ENCODE measurements at regions of chr14 and their contacts with region 1.

Region 1: DNA sequence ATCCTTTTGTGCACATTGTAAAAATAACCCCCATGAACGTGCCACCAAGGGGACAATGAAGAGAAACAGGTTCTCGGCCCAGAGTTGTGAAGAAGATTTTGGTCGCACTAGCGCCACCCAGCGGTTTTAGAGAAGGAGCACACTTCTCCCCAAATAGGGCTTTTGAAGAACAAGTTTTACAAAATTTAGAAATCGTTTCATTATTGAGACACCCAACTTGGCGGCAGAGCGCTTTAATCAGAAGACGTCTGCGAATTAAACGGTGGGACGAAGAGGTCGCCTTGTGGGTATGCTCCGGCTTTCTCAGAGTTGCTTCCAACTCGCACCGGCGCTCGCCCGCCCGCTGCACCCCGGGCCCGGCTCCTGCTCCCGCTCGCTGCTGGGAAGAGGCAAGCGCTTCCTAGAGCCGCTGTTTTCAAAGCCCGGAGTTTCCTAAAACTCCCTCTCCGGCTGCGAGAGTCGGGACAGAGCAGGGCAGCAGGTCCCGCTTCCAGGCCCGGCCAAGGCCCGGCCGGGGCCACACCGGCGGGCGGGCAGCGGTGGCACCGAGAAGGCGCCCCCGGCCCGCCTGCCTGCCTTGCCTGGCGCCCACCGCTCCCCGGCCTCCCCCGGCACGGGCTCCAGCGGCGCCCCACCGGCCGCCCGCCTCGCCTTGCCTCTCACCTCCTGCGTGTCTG is 673 bp downstream of the FOXA1 start:
- DNase-seq: peak; percentile 99
- ATAC-seq: peak; percentile 19
- H3K4me3 ChIP-seq: peak overlapping the region; percentile 87 to 96 (median 95)
- H3K27ac ChIP-seq: peak overlapping the region; percentile 96
- H3K4me1 ChIP-seq: peaks cover 43% of the 10 kb centered on the region
- H3K27me3 ChIP-seq: no peaks in the 10 kb centered on the region; a peak in 1 of 5 replicates
- CTCF ChIP-seq: peak; percentile 95
- EP300 ChIP-seq: peak in 1 of 2 experiments; percentile 23; a peak in 1 of 4 replicates
- POLR2A ChIP-seq: no peak
- RAD21 ChIP-seq: peak; percentile 88

Region 2: GRCh38 chr14:37253905-37254304 is 340.5 kb before region 1 on chr14:
- CTCF ChIA-PET with region 1: interaction called, 16 read pairs
- POLR2A ChIA-PET with region 1: interaction called, 19 read pairs
- in situ Hi-C with region 1: loop called (anchors 5 kb)
- intact Hi-C with region 1: loop called (anchors 1 kb)
- DNase-seq: no peak
- ATAC-seq: no peak
- H3K4me3 ChIP-seq: no peak overlapping the region
- H3K27ac ChIP-seq: no peak overlapping the region
- H3K4me1 ChIP-seq: peaks cover 29% of the 10 kb centered on the region
- H3K27me3 ChIP-seq: no peaks in the 10 kb centered on the region
- CTCF ChIP-seq: no peak
- EP300 ChIP-seq: no peak
- POLR2A ChIP-seq: no peak
- RAD21 ChIP-seq: no peak

Region 3: DNA sequence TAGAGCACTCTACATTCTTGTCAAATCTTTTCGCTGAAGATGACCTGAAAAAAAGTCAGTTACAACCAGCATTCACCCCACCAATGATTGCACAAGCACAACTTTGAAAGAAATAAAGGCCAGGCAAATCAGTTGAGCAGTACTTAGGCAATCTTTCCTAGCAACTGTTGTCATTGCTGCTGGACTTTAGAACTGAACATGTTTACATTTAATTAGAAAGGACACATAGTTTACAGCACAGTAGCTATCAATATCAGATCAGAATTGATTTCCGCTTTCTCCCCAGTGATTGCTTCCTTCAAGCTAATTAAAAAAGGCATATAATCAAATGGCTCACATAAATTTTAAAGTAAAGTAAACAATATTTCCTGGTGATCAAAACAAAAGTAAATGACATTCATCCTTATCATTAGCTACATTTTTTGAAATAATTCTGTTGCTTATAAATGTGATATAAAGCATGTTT is 127.7 kb before region 1 on chr14:
- CTCF ChIA-PET with region 1: no interaction called
- POLR2A ChIA-PET with region 1: interaction called, 34 read pairs
- in situ Hi-C with region 1: no loop called
- intact Hi-C with region 1: loop called (anchors 1 kb)
- DNase-seq: peak; percentile 100
- ATAC-seq: peak; percentile 97
- H3K4me3 ChIP-seq: peak overlapping the region in 1 of 3 experiments; percentile 12; a peak in 2 of 6 replicates
- H3K27ac ChIP-seq: peak overlapping the region; percentile 81
- H3K4me1 ChIP-seq: peaks cover 46% of the 10 kb centered on the region
- H3K27me3 ChIP-seq: no peaks in the 10 kb centered on the region
- CTCF ChIP-seq: no peak
- EP300 ChIP-seq: peak; percentile 100
- POLR2A ChIP-seq: no peak
- RAD21 ChIP-seq: peak; percentile 67

Region 4: DNA sequence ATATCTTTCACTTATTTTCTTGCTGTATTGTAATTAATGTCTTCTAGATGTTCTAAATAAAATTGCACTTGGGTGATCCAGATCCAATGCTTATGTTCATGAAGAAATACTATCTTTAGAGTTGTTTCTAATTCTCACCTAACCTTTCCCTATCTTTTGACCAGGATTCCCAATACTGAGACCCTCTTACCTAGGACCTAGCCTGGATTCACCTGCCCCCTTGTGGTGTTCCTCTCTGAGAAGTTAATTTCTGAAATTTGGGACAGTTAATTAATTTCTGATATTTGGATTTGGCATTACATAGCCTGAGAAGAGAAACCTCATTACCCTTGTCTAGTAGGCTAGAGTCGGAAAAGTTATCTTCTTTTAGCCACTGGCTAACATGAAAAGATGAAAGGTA is 28.8 kb before region 1 on chr14:
- CTCF ChIA-PET with region 1: interaction called, 8 read pairs
- POLR2A ChIA-PET with region 1: interaction called, 16 read pairs
- in situ Hi-C with region 1: no loop called
- intact Hi-C with region 1: loop called (anchors 1 kb)
- DNase-seq: peak; percentile 70
- ATAC-seq: peak; percentile 76
- H3K4me3 ChIP-seq: no peak overlapping the region
- H3K27ac ChIP-seq: no peak overlapping the region
- H3K4me1 ChIP-seq: peaks cover 20% of the 10 kb centered on the region
- H3K27me3 ChIP-seq: no peaks in the 10 kb centered on the region
- CTCF ChIP-seq: peak; percentile 88
- EP300 ChIP-seq: 0 out of 4 replicates have a peak, but pooled peaks of 1 of the 2 experiments have one; percentile 9
- POLR2A ChIP-seq: no peak
- RAD21 ChIP-seq: peak; percentile 92

Region 5: DNA sequence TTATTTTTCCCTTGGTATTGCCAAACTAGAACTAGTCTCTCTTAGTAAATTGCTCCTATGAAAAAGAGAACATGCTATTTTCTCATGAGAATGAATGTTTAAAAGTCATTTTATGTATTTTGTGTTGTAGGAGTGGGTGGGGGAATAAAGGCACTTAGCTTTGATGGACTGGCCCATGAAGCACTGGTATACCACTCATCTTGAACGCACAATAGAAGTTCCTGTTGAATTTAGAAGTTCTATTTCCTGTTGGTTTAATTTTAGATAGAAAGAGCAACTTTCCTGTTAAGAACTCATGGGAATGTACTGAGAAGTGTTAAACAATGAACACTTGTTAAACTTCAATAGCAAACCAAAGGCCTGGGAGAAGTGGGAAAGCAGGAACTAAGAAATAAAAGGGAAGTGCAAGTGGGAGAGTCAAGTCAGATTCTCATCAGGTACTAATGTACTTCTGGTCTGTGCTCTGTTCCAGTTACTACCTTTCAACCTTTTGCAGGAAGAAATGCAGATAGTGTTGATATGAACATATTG is 24.2 kb after region 1 on chr14:
- CTCF ChIA-PET with region 1: no interaction called
- POLR2A ChIA-PET with region 1: interaction called, 13 read pairs
- in situ Hi-C with region 1: no loop called
- intact Hi-C with region 1: no loop called
- DNase-seq: peak; percentile 50
- ATAC-seq: peak; percentile 26; the same call in 2 of the 3 replicates
- H3K4me3 ChIP-seq: no peak overlapping the region
- H3K27ac ChIP-seq: peak overlapping the region; percentile 14
- H3K4me1 ChIP-seq: peaks cover 36% of the 10 kb centered on the region
- H3K27me3 ChIP-seq: no peaks in the 10 kb centered on the region
- CTCF ChIP-seq: no peak
- EP300 ChIP-seq: no peak
- POLR2A ChIP-seq: no peak
- RAD21 ChIP-seq: no peak

Region 6: DNA sequence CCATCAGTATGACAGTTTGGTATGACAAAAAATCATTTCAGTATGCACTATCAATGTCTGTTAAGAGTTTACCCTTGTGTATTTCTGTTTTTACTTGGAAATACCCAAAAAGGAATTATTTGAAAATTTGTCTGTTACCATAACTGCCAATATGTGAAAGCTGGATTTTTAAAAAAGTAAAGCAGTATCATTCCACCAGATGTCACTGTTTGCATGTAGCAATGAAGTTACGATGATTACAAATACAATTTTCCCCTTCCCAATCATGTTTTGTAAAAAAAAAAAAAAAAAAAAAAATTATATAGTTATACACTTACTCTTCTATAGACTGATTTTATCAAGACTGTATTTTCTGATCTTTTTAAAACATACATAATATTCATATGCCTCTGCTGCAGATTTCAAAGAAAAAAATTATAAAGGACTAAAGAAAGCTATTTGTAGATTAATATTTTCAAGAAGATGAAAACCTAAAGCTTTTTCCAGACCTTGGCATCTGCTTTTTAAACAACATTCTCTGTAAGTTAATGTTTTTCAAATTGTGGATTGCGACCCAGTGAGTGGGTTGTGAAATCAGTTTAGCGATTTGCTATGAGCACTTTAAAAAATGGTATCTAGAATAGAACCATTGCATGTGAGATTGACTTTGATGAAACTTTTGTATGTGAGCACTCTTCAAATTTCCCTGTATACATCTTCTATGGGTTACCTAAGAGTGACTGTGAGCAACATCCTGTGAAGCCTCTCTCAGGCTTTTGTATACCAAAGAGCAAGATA is 115.2 kb after region 1 on chr14:
- CTCF ChIA-PET with region 1: no interaction called
- POLR2A ChIA-PET with region 1: interaction called, 7 read pairs
- in situ Hi-C with region 1: no loop called
- intact Hi-C with region 1: loop called (anchors 2 kb)
- DNase-seq: peak; percentile 70
- ATAC-seq: no peak
- H3K4me3 ChIP-seq: no peak overlapping the region
- H3K27ac ChIP-seq: no peak overlapping the region
- H3K4me1 ChIP-seq: peaks cover 39% of the 10 kb centered on the region
- H3K27me3 ChIP-seq: no peaks in the 10 kb centered on the region
- CTCF ChIP-seq: peak; percentile 75
- EP300 ChIP-seq: no peak
- POLR2A ChIP-seq: no peak
- RAD21 ChIP-seq: peak; percentile 80

Region 7: GRCh38 chr14:37874429-37875191 is 280.2 kb after region 1 on chr14:
- CTCF ChIA-PET with region 1: interaction called, 8 read pairs
- POLR2A ChIA-PET with region 1: interaction called, 11 read pairs
- in situ Hi-C with region 1: no loop called
- intact Hi-C with region 1: loop called (anchors 1 kb)
- DNase-seq: peak; percentile 90
- ATAC-seq: peak; percentile 97
- H3K4me3 ChIP-seq: peak overlapping the region in 1 of 3 experiments; percentile 49; a peak in 2 of 6 replicates
- H3K27ac ChIP-seq: peak overlapping the region; percentile 4
- H3K4me1 ChIP-seq: peaks cover 42% of the 10 kb centered on the region
- H3K27me3 ChIP-seq: no peaks in the 10 kb centered on the region
- CTCF ChIP-seq: peak; percentile 100
- EP300 ChIP-seq: no peak; a peak in 1 of 4 replicates
- POLR2A ChIP-seq: no peak
- RAD21 ChIP-seq: peak; percentile 100

Region 8: GRCh38 chr14:37903343-37904191 is 309.2 kb after region 1 on chr14:
- CTCF ChIA-PET with region 1: no interaction called
- POLR2A ChIA-PET with region 1: no interaction called
- in situ Hi-C with region 1: no loop called
- intact Hi-C with region 1: no loop called
- DNase-seq: peak; percentile 75
- ATAC-seq: peak; percentile 90
- H3K4me3 ChIP-seq: peak overlapping the region in 2 of 3 experiments; percentile 1 to 29; a peak in 2 of 6 replicates
- H3K27ac ChIP-seq: no peak overlapping the region
- H3K4me1 ChIP-seq: peaks cover 8% of the 10 kb centered on the region
- H3K27me3 ChIP-seq: no peaks in the 10 kb centered on the region
- CTCF ChIP-seq: peak; percentile 79
- EP300 ChIP-seq: no peak
- POLR2A ChIP-seq: no peak
- RAD21 ChIP-seq: peak; percentile 69

Region 9: GRCh38 chr14:38003746-38004609 is 409.6 kb after region 1 on chr14:
- CTCF ChIA-PET with region 1: no interaction called
- POLR2A ChIA-PET with region 1: no interaction called
- in situ Hi-C with region 1: no loop called
- intact Hi-C with region 1: no loop called
- DNase-seq: no peak
- ATAC-seq: peak; percentile 36
- H3K4me3 ChIP-seq: no peak overlapping the region
- H3K27ac ChIP-seq: no peak overlapping the region
- H3K4me1 ChIP-seq: no peaks in the 10 kb centered on the region
- H3K27me3 ChIP-seq: no peaks in the 10 kb centered on the region
- CTCF ChIP-seq: no peak
- EP300 ChIP-seq: no peak
- POLR2A ChIP-seq: no peak
- RAD21 ChIP-seq: no peak